Activated CD4-positive, alpha-beta memory T cell treated with anti-CD3 and anti-CD28 coated beads for 36 hours (primary cell): ENCODE measurements at regions of chr6 and their contacts with region 1.

Region 1: DNA sequence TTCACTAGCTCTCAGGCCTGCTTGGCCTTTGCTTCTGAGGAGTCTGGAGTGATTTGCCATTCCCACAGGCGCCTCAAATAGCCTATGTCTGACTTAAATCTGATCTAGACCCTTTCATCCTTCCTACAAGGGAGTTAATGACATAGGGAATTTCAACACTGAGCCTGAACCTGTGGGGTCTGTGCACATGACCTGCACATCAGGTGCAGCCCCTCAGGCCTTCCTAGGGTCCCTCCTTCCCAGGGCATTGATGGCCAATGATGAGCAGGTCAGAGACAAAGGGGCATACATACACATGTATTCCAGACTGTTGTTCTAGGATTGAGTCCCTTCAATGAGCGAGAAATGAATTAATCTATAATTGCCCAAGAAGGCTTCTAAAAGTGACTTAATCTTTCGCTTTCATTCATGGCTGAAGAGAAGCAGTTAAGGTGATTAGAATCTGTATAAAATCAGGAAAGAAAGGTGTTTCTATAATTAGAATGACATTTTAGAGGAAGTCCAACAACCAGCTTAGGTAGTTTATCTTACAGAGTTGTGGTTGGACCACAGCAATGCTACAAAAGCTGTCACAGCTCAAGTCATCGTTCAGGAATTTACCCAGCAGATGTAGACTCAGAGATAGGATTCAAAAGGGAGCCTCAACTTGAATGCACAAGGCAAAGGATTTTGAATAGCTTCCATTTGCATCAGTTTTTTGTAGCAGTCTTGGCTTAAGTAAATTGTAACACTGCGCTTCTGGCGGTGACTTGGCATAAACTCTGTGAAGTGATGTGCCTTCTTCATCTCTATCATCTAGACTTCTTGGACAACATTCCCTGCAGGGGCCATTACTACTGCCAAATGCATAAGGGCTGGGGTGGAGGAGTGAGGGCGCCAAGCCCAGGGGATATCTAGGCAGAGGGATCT is 27.0 kb upstream of the TBC1D7 start:
- DNase-seq: peak; percentile 52
- H3K4me3 Mint-ChIP-seq: peak overlapping the region; percentile 56
- H3K27ac Mint-ChIP-seq: peak overlapping the region; percentile 97
- H3K4me1 Mint-ChIP-seq: peaks cover 45% of the 10 kb centered on the region
- H3K27me3 Mint-ChIP-seq: no peaks in the 10 kb centered on the region

Region 2: DNA sequence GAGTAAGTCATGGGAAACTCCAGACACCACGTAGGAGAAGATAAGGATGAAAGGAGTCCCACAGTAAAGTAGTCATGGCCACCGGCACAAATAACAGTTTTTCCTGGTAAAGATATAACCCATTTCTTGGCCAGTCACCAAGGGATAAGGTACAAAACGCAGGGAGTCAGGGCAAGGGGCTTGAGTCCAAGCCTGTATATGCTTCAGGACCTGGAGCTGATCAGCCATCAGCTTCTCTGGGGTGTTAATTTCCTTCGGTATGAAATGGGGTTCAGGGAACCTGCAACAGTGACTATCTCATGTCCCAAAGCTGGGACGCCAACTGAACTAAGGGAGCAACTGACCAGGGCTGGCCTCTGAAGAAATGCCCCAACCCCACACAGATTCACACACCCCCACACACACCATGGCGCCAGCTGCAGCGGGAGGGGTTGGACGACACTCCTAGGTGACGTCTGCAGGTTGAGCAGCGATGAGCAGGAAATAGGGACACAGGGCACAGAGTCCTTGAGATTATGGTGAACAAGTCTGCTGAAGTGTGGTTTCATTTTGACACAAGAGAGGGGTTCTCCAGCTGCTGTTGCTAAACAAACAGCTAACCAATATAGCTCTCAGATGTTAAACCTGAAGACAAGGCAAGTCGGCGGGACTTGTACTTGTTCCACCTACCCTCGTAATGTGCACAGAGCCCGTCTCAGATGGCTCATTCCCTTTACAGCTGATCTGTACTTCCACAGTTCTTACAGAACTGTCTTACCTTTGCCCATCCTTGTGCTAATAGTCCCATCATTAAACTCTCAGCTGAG is 1569.3 kb before region 1 on chr6:
- CTCF ChIA-PET with region 1: no interaction called
- POLR2A ChIA-PET with region 1: no interaction called
- intact Hi-C with region 1: loop called (anchors 5 kb)
- DNase-seq: peak; percentile 80
- H3K4me3 Mint-ChIP-seq: peak overlapping the region; percentile 70
- H3K27ac Mint-ChIP-seq: peak overlapping the region; percentile 75
- H3K4me1 Mint-ChIP-seq: peaks cover 10% of the 10 kb centered on the region
- H3K27me3 Mint-ChIP-seq: peaks cover 10% of the 10 kb centered on the region

Region 3: GRCh38 chr6:13278991-13279390 is 76.3 kb before region 1 on chr6:
- CTCF ChIA-PET with region 1: no interaction called
- POLR2A ChIA-PET with region 1: no interaction called
- intact Hi-C with region 1: no loop called
- DNase-seq: no peak
- H3K4me3 Mint-ChIP-seq: no peak overlapping the region
- H3K27ac Mint-ChIP-seq: no peak overlapping the region
- H3K4me1 Mint-ChIP-seq: peaks cover 8% of the 10 kb centered on the region
- H3K27me3 Mint-ChIP-seq: no peaks in the 10 kb centered on the region

Region 4: GRCh38 chr6:13302751-13303667 is 52.3 kb before region 1 on chr6:
- CTCF ChIA-PET with region 1: no interaction called
- POLR2A ChIA-PET with region 1: no interaction called
- intact Hi-C with region 1: loop called (anchors 1 kb)
- DNase-seq: peak; percentile 74
- H3K4me3 Mint-ChIP-seq: peak overlapping the region; percentile 24
- H3K27ac Mint-ChIP-seq: peak overlapping the region; percentile 83
- H3K4me1 Mint-ChIP-seq: peaks cover 27% of the 10 kb centered on the region
- H3K27me3 Mint-ChIP-seq: no peaks in the 10 kb centered on the region

Region 5: DNA sequence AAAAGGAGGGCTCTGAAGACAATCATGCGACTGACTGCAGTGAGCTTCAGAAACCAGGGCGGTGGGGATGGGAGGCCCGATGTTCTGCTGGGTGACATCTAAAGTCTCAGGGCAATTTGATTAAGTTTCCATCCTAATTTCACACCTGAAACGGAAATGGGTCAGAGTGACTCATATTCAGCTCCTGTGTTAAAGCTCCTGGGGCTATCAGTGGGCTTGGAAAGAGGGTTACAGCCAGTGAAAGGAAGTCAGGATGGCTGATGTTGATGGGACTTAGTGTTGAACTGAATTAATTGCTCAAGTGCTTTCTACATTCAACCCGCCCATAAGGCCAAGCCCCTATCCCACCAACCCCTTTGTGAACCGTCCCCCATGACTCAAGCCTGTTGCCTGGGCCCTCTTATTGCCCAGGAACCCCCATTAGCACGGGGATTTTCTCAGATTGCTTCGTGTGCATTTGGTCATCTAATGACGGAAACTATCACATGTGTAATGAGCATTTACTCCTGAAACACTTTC is 20.1 kb after region 1 on chr6:
- CTCF ChIA-PET with region 1: interaction called, 4 read pairs
- POLR2A ChIA-PET with region 1: interaction called, 3 read pairs
- intact Hi-C with region 1: loop called (anchors 1 kb)
- DNase-seq: peak; percentile 72
- H3K4me3 Mint-ChIP-seq: no peak overlapping the region
- H3K27ac Mint-ChIP-seq: no peak overlapping the region
- H3K4me1 Mint-ChIP-seq: peaks cover 20% of the 10 kb centered on the region
- H3K27me3 Mint-ChIP-seq: no peaks in the 10 kb centered on the region

Region 6: DNA sequence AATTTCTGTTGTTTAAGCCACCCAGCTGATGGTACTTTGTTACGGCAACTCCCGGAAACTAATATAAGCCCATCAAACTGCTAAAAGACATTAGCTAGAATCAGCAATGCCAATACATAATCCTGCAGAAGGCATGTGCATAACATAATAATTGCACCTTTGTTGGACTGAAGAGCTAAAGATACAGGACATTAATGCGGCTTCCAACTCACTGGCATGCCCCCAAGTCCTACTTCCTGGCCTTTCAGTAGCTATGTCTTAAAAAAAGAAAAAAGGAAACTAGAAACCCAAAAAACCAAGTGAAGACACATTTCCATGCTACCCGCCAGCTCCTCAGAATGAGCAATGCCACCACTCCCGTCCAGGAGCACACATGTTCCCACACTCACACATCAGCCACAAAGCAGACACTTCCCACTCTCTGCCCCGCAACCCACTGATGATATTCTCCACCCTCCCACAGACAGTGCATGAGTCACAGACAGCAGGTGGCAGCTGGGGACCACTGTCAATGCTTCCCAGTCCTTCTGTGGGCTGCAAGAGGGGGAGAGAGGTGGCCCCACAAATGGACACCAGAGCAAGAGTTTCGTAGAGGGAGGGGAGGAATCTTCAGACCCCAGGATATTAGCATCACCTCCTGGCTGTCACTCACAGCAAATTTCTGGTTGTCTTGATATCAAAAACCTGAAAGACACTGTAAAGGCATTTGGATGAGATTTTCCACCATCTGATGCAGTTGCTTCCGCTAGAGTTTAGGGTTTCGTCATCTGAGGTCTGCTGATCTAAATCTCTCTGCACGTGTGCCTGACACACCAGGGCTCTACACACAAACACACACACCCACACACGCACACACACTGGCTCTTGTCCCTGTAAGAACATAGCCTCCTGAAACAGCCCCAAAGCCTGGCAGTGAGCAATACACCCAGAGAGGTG is 99.3 kb after region 1 on chr6:
- CTCF ChIA-PET with region 1: interaction called, 6 read pairs
- POLR2A ChIA-PET with region 1: interaction called, 5 read pairs
- intact Hi-C with region 1: loop called (anchors 1 kb)
- DNase-seq: peak; percentile 86
- H3K4me3 Mint-ChIP-seq: peak overlapping the region; percentile 28
- H3K27ac Mint-ChIP-seq: peak overlapping the region; percentile 89
- H3K4me1 Mint-ChIP-seq: peaks cover 43% of the 10 kb centered on the region
- H3K27me3 Mint-ChIP-seq: no peaks in the 10 kb centered on the region

Region 7: GRCh38 chr6:13487122-13488014 is 132.1 kb after region 1 on chr6 and contains the start of gene GFOD1:
- CTCF ChIA-PET with region 1: interaction called, 3 read pairs
- POLR2A ChIA-PET with region 1: interaction called, 3 read pairs
- intact Hi-C with region 1: loop called (anchors 1 kb)
- DNase-seq: peak; percentile 82
- H3K4me3 Mint-ChIP-seq: peak within 1 kb of the TSS; percentile 73
- H3K27ac Mint-ChIP-seq: peak within 1 kb of the TSS; percentile 15
- H3K4me1 Mint-ChIP-seq: peaks cover 29% of the 10 kb centered on the region
- H3K27me3 Mint-ChIP-seq: peaks cover 13% of the 10 kb centered on the region
- total RNA-seq, gene GFOD1: 2.3 to 2.4 TPM